ENCODE measurements at regions of chr1 and their contacts with region 1.

Region 1: GRCh38 chr1:148388260-148389027 is 94.7 kb downstream of the PPIAL4G start:
- DNase-seq: peak; percentile 89 to 91
- H3K4me3 ChIP-seq: peak overlapping the region; percentile 69
- H3K27ac ChIP-seq: peak overlapping the region; percentile 93
- H3K4me1 ChIP-seq: peaks cover 16% of the 10 kb centered on the region
- H3K27me3 ChIP-seq: no peaks in the 10 kb centered on the region
- CTCF ChIP-seq: no peak

Region 2: GRCh38 chr1:148347781-148348180 is 40.7 kb before region 1 on chr1:
- CTCF ChIA-PET with region 1: no interaction called
- POLR2A ChIA-PET with region 1: no interaction called
- intact Hi-C with region 1: no loop called
- DNase-seq: no peak
- H3K4me3 ChIP-seq: no peak overlapping the region
- H3K27ac ChIP-seq: no peak overlapping the region
- H3K4me1 ChIP-seq: peaks cover 6% of the 10 kb centered on the region; the same call in 1 of the 2 replicates
- H3K27me3 ChIP-seq: no peaks in the 10 kb centered on the region
- CTCF ChIP-seq: no peak

Region 3: DNA sequence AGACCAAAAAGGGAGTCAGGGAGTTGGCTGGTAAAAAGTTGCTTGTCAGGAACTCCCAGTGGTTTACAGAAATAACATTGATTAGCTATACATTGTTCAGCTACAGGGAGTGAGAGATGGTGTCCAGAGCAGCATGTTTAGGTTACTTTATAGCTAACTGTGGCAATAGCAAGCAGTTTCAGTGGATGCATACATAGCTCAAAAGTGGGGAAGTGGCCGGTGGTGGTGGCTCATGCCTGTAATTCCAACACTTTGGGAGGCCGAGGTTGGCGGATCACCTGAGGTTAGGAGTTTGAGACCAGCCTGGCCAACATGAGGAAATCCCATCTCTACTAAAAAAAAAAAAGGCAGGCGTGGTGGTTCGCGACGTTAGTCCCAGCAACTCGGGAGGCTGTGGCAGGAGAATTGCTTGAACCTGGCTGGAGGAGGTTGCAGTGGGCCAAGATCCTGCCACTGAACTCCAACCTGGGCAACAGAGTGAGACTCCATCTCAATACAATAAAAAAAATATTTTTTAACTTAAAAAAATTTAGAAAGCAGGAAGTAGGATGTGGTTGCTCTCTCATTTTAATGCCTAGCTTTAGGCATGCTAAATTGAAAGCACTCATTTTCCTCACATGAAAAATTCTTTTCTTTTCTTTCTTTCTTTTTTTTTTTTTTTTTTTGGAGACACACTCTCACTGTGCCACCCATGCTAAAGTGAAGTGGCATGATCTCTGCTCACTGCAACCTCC is 15.1 kb before region 1 on chr1:
- CTCF ChIA-PET with region 1: interaction called, 4 read pairs
- POLR2A ChIA-PET with region 1: interaction called, 17 read pairs
- intact Hi-C with region 1: loop called (anchors 2 kb)
- DNase-seq: no peak
- H3K4me3 ChIP-seq: no peak overlapping the region
- H3K27ac ChIP-seq: peak overlapping the region; percentile 88
- H3K4me1 ChIP-seq: peaks cover 38% of the 10 kb centered on the region
- H3K27me3 ChIP-seq: no peaks in the 10 kb centered on the region
- CTCF ChIP-seq: no peak

Measured in PC-9 (cell line).